ENCODE measurements at regions of chr10 and their contacts with region 1.

Region 1: DNA sequence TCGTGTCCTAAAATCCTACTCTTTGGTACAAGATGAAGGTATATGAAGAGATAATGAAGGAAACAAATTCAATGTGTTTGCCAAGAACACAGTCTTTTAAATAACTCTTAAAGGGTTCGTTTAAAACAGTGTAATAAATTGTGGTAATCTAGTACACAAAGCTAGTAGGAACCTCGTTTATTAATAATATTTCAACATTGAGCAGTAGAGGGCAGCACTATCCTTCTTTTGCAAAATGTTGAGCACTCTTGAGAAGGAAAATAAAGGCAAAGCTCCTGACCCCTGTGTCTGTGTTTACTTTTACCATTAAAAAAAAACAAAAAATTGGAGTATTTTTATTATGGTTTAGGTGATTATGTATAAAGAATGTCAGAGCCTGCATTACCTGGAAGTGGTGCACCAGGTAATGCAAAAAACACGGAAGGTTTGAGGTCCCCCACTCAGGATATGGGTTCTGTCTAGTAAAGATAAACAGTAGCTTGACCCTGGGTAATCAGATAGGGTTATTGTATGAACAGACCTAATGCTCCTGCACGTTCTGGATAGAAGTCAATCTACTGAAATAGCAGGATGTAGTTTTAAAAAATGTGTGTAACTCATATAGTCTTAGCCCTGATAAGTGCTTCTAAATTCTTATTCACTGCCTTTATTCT is 5.7 kb upstream of the GOT1 start:
- DNase-seq: peak; percentile 23
- H3K4me3 ChIP-seq: no peak overlapping the region
- H3K27ac ChIP-seq: no peak overlapping the region
- H3K27me3 ChIP-seq: no peaks in the 10 kb centered on the region
- CTCF ChIP-seq: peak; percentile 48

Region 2: DNA sequence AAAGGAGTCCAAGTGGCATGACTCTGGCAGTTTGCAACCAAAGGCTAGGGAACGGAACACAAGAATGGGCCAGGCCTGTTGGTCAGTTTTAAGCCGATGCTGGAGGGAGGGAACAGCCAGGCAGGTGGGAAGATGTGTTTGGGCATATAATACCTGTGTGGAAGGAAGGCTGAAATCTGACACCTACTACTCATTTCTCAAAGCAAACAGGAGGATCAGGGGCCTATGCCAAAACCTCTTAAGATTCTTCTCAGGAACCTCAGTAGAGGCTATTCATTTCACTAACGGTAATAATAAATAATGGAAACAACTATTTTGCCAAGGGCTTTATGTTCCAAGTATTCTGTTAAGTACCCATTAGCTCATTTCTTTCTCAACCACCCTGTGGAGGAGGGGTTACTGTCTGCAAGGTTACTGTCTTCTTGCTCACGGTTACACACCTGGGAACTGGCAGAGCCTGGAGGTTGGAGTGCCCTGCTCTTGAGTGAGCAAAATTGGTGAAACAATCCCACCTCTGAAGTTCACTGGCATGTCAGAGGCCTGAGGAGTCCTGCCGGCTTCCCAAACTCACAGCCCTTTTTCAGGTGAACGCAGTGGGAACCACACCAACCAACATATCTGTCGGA is 41.2 kb before region 1 on chr10:
- CTCF ChIA-PET with region 1: interaction called, 27 read pairs
- POLR2A ChIA-PET with region 1: no interaction called
- DNase-seq: no peak
- H3K4me3 ChIP-seq: no peak overlapping the region
- H3K27ac ChIP-seq: no peak overlapping the region
- H3K27me3 ChIP-seq: peaks cover 4% of the 10 kb centered on the region
- CTCF ChIP-seq: no peak

Region 3: DNA sequence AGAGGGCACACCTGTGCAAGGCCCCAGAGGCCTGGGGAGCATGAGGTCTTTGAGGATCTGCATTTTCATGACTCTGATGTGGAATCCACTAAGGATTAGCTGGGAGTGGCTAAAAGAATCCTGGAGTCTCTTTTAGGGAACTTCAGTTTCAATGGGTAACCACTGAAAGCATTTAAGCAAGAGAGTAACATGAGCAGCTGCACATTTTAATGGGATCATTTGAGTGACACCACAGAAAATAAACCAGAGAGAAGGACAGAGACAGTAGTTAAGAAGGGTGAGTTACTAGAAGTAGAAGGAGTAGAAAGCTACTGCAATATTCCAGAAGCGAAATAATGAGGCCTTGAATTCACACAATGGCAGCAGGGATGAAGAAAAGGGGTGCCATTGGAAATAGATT is 10.9 kb before region 1 on chr10:
- CTCF ChIA-PET with region 1: interaction called, 14 read pairs
- POLR2A ChIA-PET with region 1: no interaction called
- DNase-seq: no peak
- H3K4me3 ChIP-seq: no peak overlapping the region
- H3K27ac ChIP-seq: no peak overlapping the region
- H3K27me3 ChIP-seq: no peaks in the 10 kb centered on the region
- CTCF ChIP-seq: no peak

Region 4: GRCh38 chr10:99457813-99458212 is 21.7 kb after region 1 on chr10:
- CTCF ChIA-PET with region 1: interaction called, 76 read pairs
- POLR2A ChIA-PET with region 1: no interaction called
- DNase-seq: no peak
- H3K4me3 ChIP-seq: no peak overlapping the region
- H3K27ac ChIP-seq: peak overlapping the region; percentile 11
- H3K27me3 ChIP-seq: peaks cover 11% of the 10 kb centered on the region
- CTCF ChIP-seq: no peak

Region 5: DNA sequence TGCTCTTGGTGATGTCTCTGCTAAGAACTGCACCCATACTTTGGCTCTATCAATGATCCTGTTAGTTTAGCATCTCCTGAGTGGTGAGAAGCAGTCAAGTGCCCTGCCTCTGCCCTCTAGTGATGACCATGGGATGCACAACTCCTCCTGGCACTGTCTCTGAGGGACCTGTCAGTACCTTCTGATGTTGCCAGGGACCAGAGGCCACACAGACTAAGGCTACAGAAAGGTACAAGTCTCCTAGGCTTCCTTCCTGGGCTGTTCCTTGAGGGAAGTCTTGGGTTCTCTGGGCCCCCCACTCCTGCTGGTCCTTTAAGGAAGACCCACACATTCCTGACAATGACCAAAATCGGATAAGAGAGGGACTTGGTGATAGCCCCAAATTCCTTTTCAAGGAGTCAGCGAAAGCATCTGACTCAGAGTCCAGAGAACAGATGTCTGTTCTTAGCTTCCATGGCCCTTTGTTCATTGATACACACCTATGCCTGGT is 112.0 kb after region 1 on chr10:
- CTCF ChIA-PET with region 1: interaction called, 32 read pairs
- POLR2A ChIA-PET with region 1: no interaction called
- DNase-seq: no peak
- H3K4me3 ChIP-seq: no peak overlapping the region
- H3K27ac ChIP-seq: no peak overlapping the region
- H3K27me3 ChIP-seq: peaks cover 25% of the 10 kb centered on the region
- CTCF ChIP-seq: peak; percentile 37

Region 6: GRCh38 chr10:99595770-99596465 is 159.8 kb after region 1 on chr10:
- CTCF ChIA-PET with region 1: interaction called, 24 read pairs
- POLR2A ChIA-PET with region 1: no interaction called
- DNase-seq: no peak
- H3K4me3 ChIP-seq: no peak overlapping the region
- H3K27ac ChIP-seq: no peak overlapping the region
- H3K27me3 ChIP-seq: peaks cover 16% of the 10 kb centered on the region
- CTCF ChIP-seq: no peak